Thyroid gland (tissue), 4 donors: ENCODE measurements at regions of chr1 and their contacts with region 1.

Region 1: GRCh38 chr1:235075188-235075926 is 53.3 kb downstream of the TOMM20 start:
- DNase-seq: peak; percentile 77 to 81
- H3K4me3 ChIP-seq: no peak overlapping the region
- H3K27ac ChIP-seq: peak overlapping the region; percentile 90 to 99 (median 96)
- H3K4me1 ChIP-seq: peaks cover 50 to 85% of the 10 kb centered on the region in 2 donors
- H3K27me3 ChIP-seq: no peaks in the 10 kb centered on the region
- CTCF ChIP-seq: no peak
- POLR2A ChIP-seq: peak in 1 of 2 donors; percentile 44

Region 2: DNA sequence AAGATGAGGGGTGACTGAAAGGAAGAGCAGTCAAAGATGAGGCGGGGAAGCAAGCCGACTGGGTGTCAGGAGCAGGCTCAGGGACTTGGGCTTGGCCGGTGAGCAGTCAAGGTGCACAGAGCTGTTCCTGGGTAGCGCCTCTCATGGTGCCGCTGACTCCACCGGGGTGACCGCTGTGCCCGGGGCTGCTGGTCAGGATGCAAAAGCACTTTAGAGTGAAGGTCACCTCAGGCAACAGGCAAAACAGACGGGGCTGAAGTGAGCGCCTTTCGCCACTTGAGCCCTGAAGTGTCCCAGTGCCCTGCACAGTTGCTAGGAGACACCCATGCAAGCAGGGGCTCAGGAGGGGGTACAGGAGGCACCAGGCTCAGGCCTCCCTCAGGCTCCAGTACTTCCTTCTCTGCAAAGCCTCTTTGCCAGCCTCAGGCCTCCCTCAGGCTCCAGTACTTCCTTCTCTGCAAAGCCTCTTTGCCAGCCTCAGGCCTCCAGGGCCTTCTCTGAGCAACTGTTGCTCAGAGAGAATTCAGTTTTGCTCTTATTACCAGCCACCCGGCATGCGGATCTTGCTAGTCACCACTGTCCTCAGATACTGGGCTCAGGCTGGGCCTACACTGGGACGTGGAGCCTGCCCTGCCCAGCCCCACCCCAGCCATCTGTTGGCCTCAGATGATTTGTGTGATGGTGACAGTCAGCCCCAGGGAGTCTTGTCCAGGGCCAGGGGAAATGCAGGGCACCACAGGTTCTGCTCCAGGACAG is 365.7 kb before region 1 on chr1:
- intact Hi-C with region 1: loop called (anchors 10 kb)
- DNase-seq: peak; percentile 97 to 98
- H3K4me3 ChIP-seq: no peak overlapping the region
- H3K27ac ChIP-seq: peak overlapping the region; percentile 93 to 96 (median 93)
- H3K4me1 ChIP-seq: peaks cover 36 to 52% of the 10 kb centered on the region in 2 donors
- H3K27me3 ChIP-seq: no peaks in the 10 kb centered on the region
- CTCF ChIP-seq: no peak
- POLR2A ChIP-seq: peak in 1 of 2 donors; percentile 78

Region 3: GRCh38 chr1:234730770-234731568 is 344.4 kb before region 1 on chr1:
- intact Hi-C with region 1: loop called (anchors 10 kb)
- DNase-seq: no peak
- H3K4me3 ChIP-seq: no peak overlapping the region
- H3K27ac ChIP-seq: no peak overlapping the region
- H3K4me1 ChIP-seq: peaks cover 16 to 27% of the 10 kb centered on the region in 2 donors
- H3K27me3 ChIP-seq: no peaks in the 10 kb centered on the region
- CTCF ChIP-seq: no peak
- POLR2A ChIP-seq: no peak

Region 4: GRCh38 chr1:234933475-234933874 is 141.9 kb before region 1 on chr1:
- intact Hi-C with region 1: no loop called
- DNase-seq: peak; percentile 91 to 93
- H3K4me3 ChIP-seq: no peak overlapping the region
- H3K27ac ChIP-seq: peak overlapping the region; percentile 58 to 73 (median 63)
- H3K4me1 ChIP-seq: peaks cover 7 to 19% of the 10 kb centered on the region in 2 donors
- H3K27me3 ChIP-seq: no peaks in the 10 kb centered on the region
- CTCF ChIP-seq: no peak
- POLR2A ChIP-seq: no peak

Region 5: DNA sequence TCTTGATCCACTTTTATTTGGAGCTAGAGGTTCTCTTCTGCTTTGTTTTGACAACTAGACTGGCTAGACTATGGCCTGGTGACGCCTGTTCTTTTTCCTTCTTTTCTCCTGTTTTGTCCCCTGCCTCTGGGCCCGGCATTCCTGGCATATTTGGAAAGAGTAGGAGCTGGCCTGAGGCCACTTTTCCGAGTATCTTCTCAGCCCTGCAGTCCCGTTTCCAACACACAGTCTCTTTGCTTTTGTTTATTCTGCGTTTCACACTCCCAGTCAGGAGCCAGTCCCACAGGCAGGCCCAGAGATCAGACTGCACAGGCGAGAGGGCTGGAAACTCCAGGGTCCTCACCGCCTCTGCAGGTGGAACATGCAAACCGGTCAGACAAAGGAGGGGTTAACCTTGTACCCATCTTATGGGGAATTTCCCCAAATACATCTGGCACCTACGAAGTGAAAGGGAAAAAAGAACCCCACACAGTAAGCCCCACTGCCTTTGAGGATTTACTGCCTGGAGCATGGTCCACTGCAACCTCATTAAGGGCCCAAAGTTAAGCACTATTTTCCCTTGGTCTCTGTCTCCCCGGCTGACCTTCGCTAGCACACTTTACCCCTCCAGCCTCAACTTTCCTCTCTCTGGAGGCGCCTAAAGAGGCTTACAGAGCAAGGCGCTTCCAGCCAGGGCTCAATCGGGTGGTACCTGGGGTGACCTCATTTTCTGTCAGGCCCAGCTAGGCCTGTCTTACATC is 87.8 kb before region 1 on chr1:
- intact Hi-C with region 1: loop called (anchors 5 kb)
- DNase-seq: peak; percentile 91 to 94
- H3K4me3 ChIP-seq: no peak overlapping the region
- H3K27ac ChIP-seq: peak overlapping the region; percentile 99
- H3K4me1 ChIP-seq: peaks cover 37 to 56% of the 10 kb centered on the region in 2 donors
- H3K27me3 ChIP-seq: no peaks in the 10 kb centered on the region
- CTCF ChIP-seq: peak in 1 of 6 experiments; percentile 17
- POLR2A ChIP-seq: peak in 1 of 2 donors; percentile 68